Common myeloid progenitor, CD34-positive (primary cell): ENCODE measurements at regions of chr11 and their contacts with region 1.

Region 1: DNA sequence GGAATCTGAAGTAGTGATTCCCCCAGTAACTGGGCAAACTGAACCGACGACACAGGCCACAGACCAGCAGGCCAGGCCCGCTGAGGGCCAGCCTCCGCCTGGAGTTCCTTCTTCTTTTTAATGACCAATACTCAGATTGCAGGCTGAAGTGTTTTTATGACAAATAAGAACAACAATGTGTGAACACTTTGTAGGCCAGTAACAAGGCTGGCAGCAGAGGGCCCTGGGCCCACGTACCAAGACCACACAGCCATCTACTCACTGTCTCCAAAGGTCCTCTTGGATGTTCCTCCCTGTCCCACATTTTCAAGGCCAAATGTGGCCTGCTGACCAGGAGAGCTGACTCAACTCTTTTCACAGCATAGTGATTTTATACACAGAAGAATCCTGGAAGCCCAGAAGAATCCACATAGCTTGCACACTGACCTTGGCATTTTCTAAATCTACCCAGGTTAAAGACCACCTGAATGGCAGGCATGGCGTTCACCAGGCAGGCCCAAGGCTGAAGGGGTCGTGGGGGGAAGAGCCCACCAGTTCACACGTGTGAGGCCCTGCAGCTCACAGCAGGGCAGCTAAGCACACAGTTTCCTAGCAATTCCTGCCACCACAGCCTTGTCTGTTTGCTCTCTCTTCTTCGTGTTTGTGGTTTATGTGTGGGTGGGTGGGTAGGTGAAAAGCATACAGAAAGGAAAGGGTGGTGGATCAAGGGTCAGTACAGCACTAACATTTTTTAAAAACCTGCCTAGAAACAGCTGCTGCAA is 13.3 kb downstream of the SMCO4 start:
- DNase-seq: peak in 2 of 3 donors; percentile 28 to 41
- H3K4me3 ChIP-seq: no peak overlapping the region
- H3K27ac ChIP-seq: peak overlapping the region in 1 of 2 experiments; percentile 27
- H3K4me1 ChIP-seq: peaks cover 10 to 75% (median 51%) of the 10 kb centered on the region in 4 experiments
- H3K27me3 ChIP-seq: no peaks in the 10 kb centered on the region

Region 2: DNA sequence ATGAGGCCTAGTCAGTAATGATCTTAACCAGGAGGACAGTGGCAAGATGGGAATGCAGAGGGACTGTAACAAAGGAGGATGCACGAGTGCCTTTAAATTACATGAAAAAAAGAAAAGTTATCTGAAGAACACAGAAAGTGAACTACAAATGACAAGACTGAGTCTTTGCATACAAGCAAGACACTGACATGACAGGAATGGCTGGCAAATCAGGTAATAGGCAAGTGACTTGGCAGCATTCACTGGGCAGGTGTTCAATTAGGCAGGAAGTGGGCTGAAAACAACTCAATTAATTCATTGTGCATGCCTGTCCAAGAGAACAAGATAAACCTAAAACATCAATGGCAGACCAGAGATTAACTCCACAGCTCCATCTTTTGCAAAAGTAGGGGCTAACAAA is 10.7 kb before region 1 on chr11:
- CTCF ChIA-PET with region 1: no interaction called
- POLR2A ChIA-PET with region 1: no interaction called
- DNase-seq: no peak
- H3K4me3 ChIP-seq: no peak overlapping the region
- H3K27ac ChIP-seq: no peak overlapping the region
- H3K4me1 ChIP-seq: peaks cover under 1 to 51% (median 28%) of the 10 kb centered on the region in 4 experiments
- H3K27me3 ChIP-seq: no peaks in the 10 kb centered on the region

Region 3: GRCh38 chr11:93543292-93543977 is 13.5 kb after region 1 on chr11 and contains the start of gene SMCO4:
- CTCF ChIA-PET with region 1: interaction called, 25 read pairs
- POLR2A ChIA-PET with region 1: no interaction called
- DNase-seq: peak; percentile 77 to 82 (median 80)
- H3K4me3 ChIP-seq: peak within 1 kb of the TSS; percentile 48 to 87 (median 73)
- H3K27ac ChIP-seq: peak within 1 kb of the TSS in 1 of 2 experiments; percentile 43
- H3K4me1 ChIP-seq: peaks cover 0 to 42% (median 24%) of the 10 kb centered on the region in 4 experiments
- H3K27me3 ChIP-seq: no peaks in the 10 kb centered on the region